PC-9 (cell line): ENCODE measurements at regions of chr3 and their contacts with region 1.

Region 1: DNA sequence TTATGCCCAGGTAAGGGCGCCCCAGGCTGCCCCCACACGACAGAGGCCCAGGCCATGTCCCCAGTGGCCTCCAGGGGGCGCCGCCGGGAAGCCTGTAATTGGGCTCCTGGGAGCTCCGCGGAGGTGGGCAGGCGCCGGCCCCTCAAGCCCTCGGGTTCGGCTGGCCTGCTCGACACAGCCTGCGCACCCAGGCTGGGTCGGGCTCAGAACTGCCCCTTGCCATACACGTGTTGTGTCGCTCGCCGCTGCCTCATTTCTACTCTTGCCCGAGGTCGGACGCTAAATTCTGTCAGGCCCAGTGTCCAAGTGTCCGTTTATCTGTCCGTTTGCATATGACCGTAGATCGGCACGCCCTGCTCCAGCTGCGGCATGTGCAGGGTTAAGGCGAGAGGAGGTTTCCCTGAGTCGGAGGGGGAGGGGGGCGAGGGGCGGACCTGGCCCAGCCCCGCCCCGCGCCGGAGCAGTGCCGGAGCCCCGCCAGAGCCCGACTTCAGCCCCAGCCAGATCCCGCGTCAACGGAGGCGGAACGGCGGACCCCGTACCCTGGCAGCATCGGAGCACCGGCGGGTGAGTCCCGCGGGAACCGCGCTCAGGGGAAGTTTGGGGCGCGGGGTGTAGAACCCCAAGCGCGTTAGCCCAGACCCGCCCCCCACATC is at the start of gene KLHDC8B:
- DNase-seq: peak; percentile 33 to 76
- H3K4me3 ChIP-seq: peak within 1 kb of the TSS; percentile 49; the same call in 1 of the 2 replicates
- H3K27ac ChIP-seq: no peak within 1 kb of the TSS
- H3K4me1 ChIP-seq: 0 out of 2 replicates have a peak, but pooled peaks cover 5% of the 10 kb centered on the region
- H3K27me3 ChIP-seq: no peaks in the 10 kb centered on the region
- CTCF ChIP-seq: peak; percentile 85
- total RNA-seq, gene KLHDC8B: 13.1 and 15.3 TPM in 2 replicates

Region 2: GRCh38 chr3:49238274-49239127 is 67.3 kb after region 1 on chr3:
- CTCF ChIA-PET with region 1: no interaction called
- POLR2A ChIA-PET with region 1: no interaction called
- intact Hi-C with region 1: loop called (anchors 5 kb)
- DNase-seq: peak; percentile 33 to 72
- H3K4me3 ChIP-seq: no peak overlapping the region
- H3K27ac ChIP-seq: peak overlapping the region; percentile 87
- H3K4me1 ChIP-seq: peaks cover 12% of the 10 kb centered on the region; the same call in 1 of the 2 replicates
- H3K27me3 ChIP-seq: no peaks in the 10 kb centered on the region
- CTCF ChIP-seq: no peak

Region 3: DNA sequence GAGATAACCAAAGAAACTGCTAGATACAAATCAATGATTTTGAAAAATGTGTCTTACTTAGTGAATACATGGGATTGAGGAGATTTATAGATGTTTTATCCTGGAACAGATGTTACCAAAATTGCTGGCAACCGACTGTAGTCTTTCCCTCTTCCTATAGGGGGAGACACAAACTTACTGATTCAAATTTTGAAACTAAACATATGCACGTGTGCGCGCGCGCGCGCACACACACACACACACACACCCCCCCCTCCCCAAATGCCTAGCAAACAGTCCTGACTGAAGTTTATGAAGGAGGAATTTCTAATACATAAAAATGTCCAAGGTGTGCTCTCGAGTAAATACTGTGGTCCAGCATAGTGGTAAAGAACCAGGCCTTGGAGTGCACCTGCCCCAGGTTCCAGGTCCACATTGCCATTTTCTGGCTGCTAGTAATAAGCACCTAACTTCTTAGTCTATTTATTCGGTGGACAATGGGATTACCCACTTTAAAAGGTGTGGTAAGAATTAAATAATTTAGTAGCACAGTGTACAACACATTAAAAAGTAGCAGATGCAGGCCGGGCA is 124.3 kb after region 1 on chr3:
- CTCF ChIA-PET with region 1: interaction called, 3 read pairs
- POLR2A ChIA-PET with region 1: no interaction called
- intact Hi-C with region 1: loop called (anchors 10 kb)
- DNase-seq: peak in 1 of 2 experiments; percentile 36
- H3K4me3 ChIP-seq: no peak overlapping the region
- H3K27ac ChIP-seq: no peak overlapping the region
- H3K4me1 ChIP-seq: no peaks in the 10 kb centered on the region
- H3K27me3 ChIP-seq: no peaks in the 10 kb centered on the region
- CTCF ChIP-seq: peak; percentile 72

Region 4: DNA sequence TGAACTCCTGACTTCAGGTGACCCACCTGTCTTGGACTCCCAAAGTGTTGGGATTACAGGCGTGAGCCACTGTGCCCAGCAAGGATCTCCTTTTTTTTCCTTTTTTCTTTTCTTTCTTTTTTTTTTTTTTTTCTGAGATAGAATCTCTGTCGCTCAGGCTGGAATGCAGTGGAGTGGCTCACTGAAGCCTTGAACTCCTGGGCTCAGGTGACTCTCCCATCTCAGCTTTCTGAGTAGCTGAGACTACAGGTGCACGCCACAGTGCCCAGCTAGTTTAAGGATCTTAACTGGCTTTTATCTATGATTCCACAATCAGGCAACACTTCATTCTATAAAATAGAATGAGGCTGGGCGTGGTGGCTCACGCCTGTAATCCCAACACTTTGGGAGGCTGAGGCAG is 274.1 kb after region 1 on chr3:
- CTCF ChIA-PET with region 1: no interaction called
- POLR2A ChIA-PET with region 1: no interaction called
- intact Hi-C with region 1: loop called (anchors 2 kb)
- DNase-seq: no peak
- H3K4me3 ChIP-seq: no peak overlapping the region
- H3K27ac ChIP-seq: no peak overlapping the region
- H3K4me1 ChIP-seq: peaks cover 17% of the 10 kb centered on the region
- H3K27me3 ChIP-seq: no peaks in the 10 kb centered on the region
- CTCF ChIP-seq: no peak

Region 5: DNA sequence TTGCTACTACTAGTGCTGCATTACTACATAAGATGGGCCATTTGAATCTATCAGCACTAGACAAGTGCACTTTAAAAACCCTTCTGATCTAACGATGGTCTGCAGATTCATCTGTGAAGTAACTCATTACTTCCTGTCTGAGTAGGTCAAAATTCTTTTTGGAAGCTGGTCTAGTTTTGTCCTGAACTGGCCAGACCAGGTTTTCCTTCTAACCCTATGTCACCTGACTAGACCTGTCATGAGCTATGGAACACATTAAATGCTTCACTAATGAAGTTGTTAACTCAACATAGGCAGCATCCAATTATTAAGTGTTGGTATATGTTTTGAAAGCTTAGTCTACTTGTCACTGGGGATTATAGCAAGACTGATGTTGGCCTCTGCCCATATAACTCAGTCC is 907.4 kb after region 1 on chr3:
- CTCF ChIA-PET with region 1: no interaction called
- POLR2A ChIA-PET with region 1: no interaction called
- intact Hi-C with region 1: no loop called
- DNase-seq: no peak
- H3K4me3 ChIP-seq: no peak overlapping the region
- H3K27ac ChIP-seq: no peak overlapping the region
- H3K4me1 ChIP-seq: no peaks in the 10 kb centered on the region
- H3K27me3 ChIP-seq: no peaks in the 10 kb centered on the region
- CTCF ChIP-seq: no peak